A673 (cell line): ENCODE measurements at regions of chrX and their contacts with region 1.

Region 1: DNA sequence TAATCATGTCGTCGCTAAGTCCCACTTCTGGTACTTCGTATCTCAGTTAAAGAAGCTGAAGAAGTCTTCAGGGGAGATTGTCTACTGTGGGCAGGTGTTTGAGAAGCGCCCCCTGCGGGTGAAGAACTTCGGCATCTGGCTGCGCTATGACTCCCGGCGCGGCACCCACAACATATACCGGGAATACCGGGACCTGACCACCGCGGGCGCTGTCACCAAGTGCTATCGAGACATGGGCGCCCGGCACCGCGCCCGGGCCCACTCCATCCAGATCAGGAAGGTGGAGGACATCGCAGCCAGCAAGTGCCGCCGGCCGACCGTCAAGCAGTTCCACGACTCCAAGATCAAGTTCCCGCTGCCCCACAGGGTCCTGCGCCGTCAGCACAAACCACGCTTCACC is 11.3 kb downstream of the PNCK start:
- DNase-seq: peak; percentile 63
- H3K4me3 ChIP-seq: no peak overlapping the region
- H3K27ac ChIP-seq: no peak overlapping the region
- H3K4me1 ChIP-seq: no peaks in the 10 kb centered on the region
- H3K27me3 ChIP-seq: peaks cover 14% of the 10 kb centered on the region
- CTCF ChIP-seq: peak; percentile 66

Region 2: GRCh38 chrX:153609917-153610428 is 52.3 kb before region 1 on chrX:
- CTCF ChIA-PET with region 1: interaction called, 5 read pairs
- POLR2A ChIA-PET with region 1: no interaction called
- intact Hi-C with region 1: loop called (anchors 1 kb)
- DNase-seq: peak; percentile 80
- H3K4me3 ChIP-seq: peak overlapping the region; percentile 35
- H3K27ac ChIP-seq: no peak overlapping the region
- H3K4me1 ChIP-seq: no peaks in the 10 kb centered on the region
- H3K27me3 ChIP-seq: peaks cover 29% of the 10 kb centered on the region
- CTCF ChIP-seq: peak; percentile 85